Activated B cell treated with CpG ODN at 0.5 μM for 24 hours (primary cell): ENCODE measurements at regions of chr9 and their contacts with region 1.

Region 1: GRCh38 chr9:69421908-69422801 is 97.1 kb downstream of the ENTREP1 start:
- DNase-seq: no peak
- ATAC-seq: no peak
- H3K4me3 Mint-ChIP-seq: no peak overlapping the region
- H3K27ac Mint-ChIP-seq: no peak overlapping the region
- H3K4me1 Mint-ChIP-seq: no peaks in the 10 kb centered on the region
- H3K27me3 Mint-ChIP-seq: peaks cover 15% of the 10 kb centered on the region
- CTCF ChIP-seq: no peak

Region 2: DNA sequence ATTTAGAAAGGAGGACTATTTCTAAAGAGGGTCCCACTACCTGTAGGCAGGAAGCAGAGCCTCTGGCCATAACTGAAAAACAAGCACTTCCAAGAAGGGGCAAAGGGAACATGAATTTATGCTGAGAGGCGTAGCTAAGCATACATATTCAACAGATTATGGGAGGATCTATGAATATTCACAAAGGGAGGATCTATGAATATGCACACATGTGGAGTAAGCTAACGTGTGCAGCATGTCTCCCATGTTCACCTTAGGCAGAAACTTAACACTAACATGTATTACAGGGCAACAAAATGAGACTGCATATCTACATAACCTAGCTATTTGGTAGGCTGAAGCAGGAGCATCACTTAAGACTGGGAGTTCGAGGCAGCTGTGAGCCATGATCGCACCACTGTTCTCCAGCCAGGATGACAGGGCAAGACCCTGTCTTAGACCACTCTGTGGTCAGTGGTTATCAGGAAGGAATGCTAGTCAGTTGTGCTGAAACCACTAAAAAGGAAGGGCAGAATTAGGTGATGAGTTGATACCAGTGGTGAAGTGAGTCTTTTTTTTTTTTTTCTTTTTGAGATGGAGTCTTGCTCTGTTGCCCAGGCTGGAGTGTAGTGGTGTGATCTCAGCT is 365.9 kb before region 1 on chr9:
- CTCF ChIA-PET with region 1: interaction called, 10 read pairs
- POLR2A ChIA-PET with region 1: no interaction called
- intact Hi-C with region 1: loop called (anchors 5 kb)
- DNase-seq: no peak
- ATAC-seq: no peak
- H3K4me3 Mint-ChIP-seq: no peak overlapping the region
- H3K27ac Mint-ChIP-seq: no peak overlapping the region
- H3K4me1 Mint-ChIP-seq: peaks cover 5% of the 10 kb centered on the region
- H3K27me3 Mint-ChIP-seq: no peaks in the 10 kb centered on the region
- CTCF ChIP-seq: no peak

Region 3: DNA sequence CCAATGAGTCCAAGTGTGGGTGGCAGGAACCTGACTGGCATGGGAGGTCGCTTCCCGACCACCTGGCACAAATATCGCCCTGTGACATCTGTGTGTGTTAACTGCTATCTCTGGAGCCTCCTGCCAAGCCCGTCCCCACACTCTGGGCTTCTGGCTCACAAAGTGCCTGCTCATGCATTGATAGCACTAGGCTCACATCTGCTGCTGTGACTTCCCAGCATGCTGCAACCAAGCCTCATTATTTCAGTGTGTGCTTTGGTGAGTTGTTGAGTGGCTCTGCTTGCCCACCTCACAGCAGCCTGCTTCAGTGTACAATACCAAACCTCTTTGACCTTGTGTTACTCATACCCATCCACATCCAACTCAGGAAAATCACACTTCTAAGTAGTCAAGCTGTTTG is 110.2 kb after region 1 on chr9:
- CTCF ChIA-PET with region 1: no interaction called
- POLR2A ChIA-PET with region 1: no interaction called
- intact Hi-C with region 1: no loop called
- DNase-seq: no peak
- ATAC-seq: no peak
- H3K4me3 Mint-ChIP-seq: no peak overlapping the region
- H3K27ac Mint-ChIP-seq: no peak overlapping the region
- H3K4me1 Mint-ChIP-seq: no peaks in the 10 kb centered on the region
- H3K27me3 Mint-ChIP-seq: peaks cover 3% of the 10 kb centered on the region
- CTCF ChIP-seq: no peak

Region 4: DNA sequence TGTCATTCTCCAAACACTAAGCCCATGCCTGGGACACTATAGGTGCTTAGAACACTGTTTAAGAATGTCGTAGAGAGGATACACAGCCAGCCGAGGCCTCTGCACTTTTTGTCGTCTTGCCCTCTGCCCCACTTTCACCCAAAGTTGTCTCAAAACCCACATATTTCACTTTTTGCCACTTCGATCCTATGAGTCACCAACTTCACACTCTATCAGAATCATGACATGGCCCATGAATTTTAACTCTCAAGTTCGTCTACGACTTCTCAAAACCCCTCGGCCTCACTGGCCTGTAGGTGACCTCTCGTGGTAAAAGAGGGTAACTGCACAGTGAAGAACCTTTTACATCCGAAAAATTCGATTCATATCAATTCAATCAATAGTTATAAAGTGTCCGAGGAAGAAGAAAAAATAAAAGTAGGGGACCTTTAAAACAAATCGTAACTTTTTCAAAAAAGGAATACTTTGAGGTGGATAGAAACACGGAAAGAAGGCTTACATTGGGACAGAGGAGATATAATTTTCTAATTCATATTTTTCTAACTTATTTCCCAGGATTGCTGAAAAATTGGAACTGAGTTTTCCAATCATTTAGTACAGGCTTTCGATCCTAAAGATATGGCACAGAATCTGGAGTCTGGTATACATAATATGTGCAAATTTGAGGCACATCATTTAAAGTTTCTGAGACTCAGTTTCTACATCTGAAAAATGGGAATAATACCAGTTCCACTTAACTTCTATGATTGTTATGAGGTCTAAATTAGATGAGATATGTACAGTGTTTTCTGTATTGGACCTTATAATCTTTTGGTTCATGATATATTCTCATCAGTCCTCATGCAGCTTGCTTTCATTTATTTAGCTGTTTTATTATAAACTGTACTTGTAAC is 127.4 kb after region 1 on chr9:
- CTCF ChIA-PET with region 1: interaction called, 7 read pairs
- POLR2A ChIA-PET with region 1: no interaction called
- intact Hi-C with region 1: loop called (anchors 1 kb)
- DNase-seq: no peak
- ATAC-seq: no peak
- H3K4me3 Mint-ChIP-seq: no peak overlapping the region
- H3K27ac Mint-ChIP-seq: no peak overlapping the region
- H3K4me1 Mint-ChIP-seq: no peaks in the 10 kb centered on the region
- H3K27me3 Mint-ChIP-seq: peaks cover 6% of the 10 kb centered on the region
- CTCF ChIP-seq: peak; percentile 82

Region 5: GRCh38 chr9:69877854-69878514 is 455.8 kb after region 1 on chr9:
- CTCF ChIA-PET with region 1: interaction called, 12 read pairs
- POLR2A ChIA-PET with region 1: no interaction called
- intact Hi-C with region 1: loop called (anchors 2 kb)
- DNase-seq: no peak
- ATAC-seq: no peak
- H3K4me3 Mint-ChIP-seq: no peak overlapping the region
- H3K27ac Mint-ChIP-seq: no peak overlapping the region
- H3K4me1 Mint-ChIP-seq: no peaks in the 10 kb centered on the region
- H3K27me3 Mint-ChIP-seq: peaks cover 11% of the 10 kb centered on the region
- CTCF ChIP-seq: no peak

Region 6: GRCh38 chr9:69919461-69920061 is 497.4 kb after region 1 on chr9:
- CTCF ChIA-PET with region 1: interaction called, 32 read pairs
- POLR2A ChIA-PET with region 1: no interaction called
- intact Hi-C with region 1: loop called (anchors 2 kb)
- DNase-seq: no peak
- ATAC-seq: peak; percentile 50
- H3K4me3 Mint-ChIP-seq: no peak overlapping the region
- H3K27ac Mint-ChIP-seq: no peak overlapping the region
- H3K4me1 Mint-ChIP-seq: no peaks in the 10 kb centered on the region
- H3K27me3 Mint-ChIP-seq: no peaks in the 10 kb centered on the region
- CTCF ChIP-seq: no peak

Region 7: DNA sequence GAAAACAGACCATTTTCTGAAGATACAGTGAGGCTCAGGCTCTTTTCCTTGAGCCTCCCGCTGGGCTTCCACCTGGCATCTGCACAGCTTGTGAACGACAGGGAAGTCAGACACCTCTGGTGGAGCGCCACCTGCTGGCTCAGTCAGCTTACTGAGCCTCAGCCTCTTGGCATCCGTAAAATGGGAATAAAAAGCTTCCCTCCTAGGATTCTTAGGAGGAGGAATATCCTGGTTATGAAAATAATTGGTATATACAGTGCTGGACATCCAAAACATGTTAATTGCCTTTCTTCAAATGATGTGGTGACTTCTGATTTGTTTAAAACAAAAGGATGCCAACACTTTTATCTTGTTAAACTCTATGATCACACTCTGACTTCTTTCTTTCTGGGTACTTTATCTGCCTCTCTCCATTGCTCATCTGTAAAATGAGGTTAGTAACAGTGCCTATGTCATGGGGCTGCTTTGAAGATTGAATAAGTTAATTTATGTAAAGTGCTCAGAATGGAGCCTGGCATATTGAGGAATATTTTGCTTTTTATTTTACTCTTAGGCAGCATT is 689.0 kb after region 1 on chr9:
- CTCF ChIA-PET with region 1: interaction called, 49 read pairs
- POLR2A ChIA-PET with region 1: no interaction called
- intact Hi-C with region 1: loop called (anchors 2 kb)
- DNase-seq: peak; percentile 35
- ATAC-seq: peak; percentile 47
- H3K4me3 Mint-ChIP-seq: no peak overlapping the region
- H3K27ac Mint-ChIP-seq: no peak overlapping the region
- H3K4me1 Mint-ChIP-seq: peaks cover 8% of the 10 kb centered on the region
- H3K27me3 Mint-ChIP-seq: peaks cover 15% of the 10 kb centered on the region
- CTCF ChIP-seq: peak; percentile 63